ENCODE measurements at regions of chr5 and their contacts with region 1.

Region 1: DNA sequence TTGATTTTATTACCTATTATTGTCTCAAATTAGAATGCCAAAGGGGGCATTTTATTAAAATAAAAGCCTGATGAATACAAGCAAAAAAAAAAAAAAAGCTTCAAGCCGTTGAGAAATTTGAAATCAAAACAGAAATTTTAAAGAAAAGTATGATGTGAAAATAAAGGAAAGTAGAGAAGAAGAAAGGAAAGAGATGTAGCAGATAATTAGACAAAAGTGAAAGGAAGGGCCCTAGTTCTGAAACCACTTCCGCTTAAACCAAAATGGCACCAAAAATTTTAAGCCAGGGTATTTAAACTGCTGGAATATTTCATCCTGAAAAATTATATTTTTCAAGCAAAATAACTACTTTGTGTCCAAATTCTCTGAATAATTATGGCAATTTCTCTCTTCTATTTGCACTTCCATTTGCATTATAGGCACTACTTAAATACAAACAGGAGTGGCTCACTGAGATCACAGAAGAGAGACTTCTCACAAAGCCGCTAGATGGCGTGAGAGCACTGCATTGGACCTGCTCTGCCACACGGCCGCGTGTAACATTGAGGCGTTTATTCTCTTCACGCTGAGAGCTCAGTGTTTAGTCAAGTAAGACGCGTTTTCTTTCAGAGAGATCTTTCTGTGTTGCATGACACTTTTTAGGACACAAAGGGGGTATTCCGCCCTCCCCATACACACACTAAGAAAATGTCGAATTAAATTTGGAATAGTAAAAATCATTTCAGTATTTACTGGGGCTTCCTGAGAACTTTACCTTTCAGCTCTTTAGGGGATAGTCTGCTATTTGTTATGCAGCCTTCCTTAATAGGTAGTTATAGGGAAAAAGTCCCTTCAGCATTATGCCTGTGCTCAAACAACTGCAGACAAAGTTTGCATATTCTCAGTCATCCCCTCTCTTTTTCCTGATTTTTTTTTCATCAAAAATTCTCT is 368.4 kb upstream of the CCNH start:
- DNase-seq: peak; percentile 66 to 67
- H3K4me3 ChIP-seq: no peak overlapping the region
- H3K27ac ChIP-seq: no peak overlapping the region
- H3K4me1 ChIP-seq: no peaks in the 10 kb centered on the region
- H3K27me3 ChIP-seq: peaks cover 0 to 23% of the 10 kb centered on the region in 2 donors
- CTCF ChIP-seq: peak; percentile 84 to 89 (median 85)
- POLR2A ChIP-seq: no peak

Region 2: DNA sequence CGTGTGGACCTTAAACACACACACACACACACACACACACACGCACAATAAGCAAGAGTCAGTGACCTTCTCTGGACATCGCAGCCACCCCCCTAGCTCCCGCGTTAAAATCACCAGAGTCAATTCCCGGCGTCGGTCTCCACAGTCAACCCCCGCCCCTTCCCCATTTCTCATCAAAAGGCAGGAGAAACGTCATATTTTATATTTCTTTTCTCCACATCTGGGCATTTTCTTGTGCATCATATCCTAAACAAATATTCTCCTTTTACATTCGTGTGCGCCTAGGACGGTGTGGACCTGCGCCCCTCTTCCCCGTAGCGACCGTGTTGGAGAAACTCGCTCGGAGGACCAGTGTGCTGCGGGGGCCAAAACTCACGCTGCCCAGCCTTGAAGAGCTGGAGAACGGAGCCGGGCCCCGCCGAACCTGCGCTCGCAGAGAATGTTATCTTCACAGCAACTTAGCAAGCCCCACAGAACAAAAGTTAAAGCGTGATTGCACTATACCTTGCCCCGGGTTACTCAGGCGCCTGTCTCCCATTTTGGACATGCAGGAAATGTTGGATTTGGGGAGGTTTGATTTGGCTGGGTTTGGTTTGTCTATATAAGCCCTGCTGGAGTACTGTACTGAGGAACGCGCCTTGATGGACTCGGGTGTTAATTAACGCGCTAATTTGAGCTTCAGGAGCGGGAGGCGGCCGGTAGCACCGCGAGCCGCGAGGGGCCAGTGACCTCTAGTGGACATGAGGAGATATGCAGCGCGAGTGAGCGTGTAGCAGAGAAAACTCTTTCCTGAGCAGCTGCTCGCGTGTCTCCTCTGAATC is 909.5 kb after region 1 on chr5:
- intact Hi-C with region 1: loop called (anchors 5 kb)
- DNase-seq: peak; percentile 51 to 61
- H3K4me3 ChIP-seq: peak overlapping the region in 1 of 2 donors; percentile 17
- H3K27ac ChIP-seq: no peak overlapping the region
- H3K4me1 ChIP-seq: peaks cover 3 to 4% of the 10 kb centered on the region in 2 donors
- H3K27me3 ChIP-seq: peaks cover 14 to 93% of the 10 kb centered on the region in 2 donors
- CTCF ChIP-seq: peak; percentile 73 to 96 (median 90)
- POLR2A ChIP-seq: no peak